Activated B cell treated with CpG ODN at 0.5 μM for 24 hours (primary cell): ENCODE measurements at regions of chr19 and their contacts with region 1.

Region 1: GRCh38 chr19:56393119-56394012 is at the start of gene ZNF582:
- DNase-seq: peak; percentile 85
- ATAC-seq: peak; percentile 96
- H3K4me3 Mint-ChIP-seq: peak within 1 kb of the TSS; percentile 97
- H3K27ac Mint-ChIP-seq: peak within 1 kb of the TSS; percentile 96
- H3K4me1 Mint-ChIP-seq: peaks cover 13% of the 10 kb centered on the region
- H3K27me3 Mint-ChIP-seq: no peaks in the 10 kb centered on the region
- CTCF ChIP-seq: no peak
- total RNA-seq, gene ZNF582: 7.4 and 7.9 TPM in 2 replicates

Region 2: GRCh38 chr19:56367829-56368711 is 25.3 kb before region 1 on chr19:
- CTCF ChIA-PET with region 1: no interaction called
- POLR2A ChIA-PET with region 1: interaction called, 8 read pairs
- intact Hi-C with region 1: loop called (anchors 1 kb)
- DNase-seq: peak; percentile 79
- ATAC-seq: peak; percentile 99
- H3K4me3 Mint-ChIP-seq: peak overlapping the region; percentile 95
- H3K27ac Mint-ChIP-seq: peak overlapping the region; percentile 89
- H3K4me1 Mint-ChIP-seq: peaks cover 23% of the 10 kb centered on the region
- H3K27me3 Mint-ChIP-seq: no peaks in the 10 kb centered on the region
- CTCF ChIP-seq: no peak

Region 3: GRCh38 chr19:56403764-56404704 is 10.7 kb after region 1 on chr19 and contains the start of gene ZNF583:
- CTCF ChIA-PET with region 1: interaction called, 5 read pairs
- POLR2A ChIA-PET with region 1: interaction called, 24 read pairs
- intact Hi-C with region 1: loop called (anchors 1 kb)
- DNase-seq: peak; percentile 93
- ATAC-seq: peak; percentile 87
- H3K4me3 Mint-ChIP-seq: peak within 1 kb of the TSS; percentile 95
- H3K27ac Mint-ChIP-seq: peak within 1 kb of the TSS; percentile 96
- H3K4me1 Mint-ChIP-seq: peaks cover 29% of the 10 kb centered on the region
- H3K27me3 Mint-ChIP-seq: no peaks in the 10 kb centered on the region
- CTCF ChIP-seq: no peak
- total RNA-seq, gene ZNF583: 5.7 and 6.0 TPM in 2 replicates

Region 4: GRCh38 chr19:56507446-56508289 is 114.3 kb after region 1 on chr19 and contains the start of gene ZNF471:
- CTCF ChIA-PET with region 1: no interaction called
- POLR2A ChIA-PET with region 1: no interaction called
- intact Hi-C with region 1: loop called (anchors 1 kb)
- DNase-seq: peak; percentile 81
- ATAC-seq: peak; percentile 99
- H3K4me3 Mint-ChIP-seq: no peak within 1 kb of the TSS
- H3K27ac Mint-ChIP-seq: no peak within 1 kb of the TSS
- H3K4me1 Mint-ChIP-seq: peaks cover 9% of the 10 kb centered on the region
- H3K27me3 Mint-ChIP-seq: no peaks in the 10 kb centered on the region
- CTCF ChIP-seq: no peak
- total RNA-seq, gene ZNF471: 1.8 and 2.1 TPM in 2 replicates

Region 5: GRCh38 chr19:56671613-56671994 is 278.2 kb after region 1 on chr19 and contains the start of gene ZNF835:
- CTCF ChIA-PET with region 1: no interaction called
- POLR2A ChIA-PET with region 1: interaction called, 4 read pairs
- intact Hi-C with region 1: loop called (anchors 1 kb)
- DNase-seq: peak; percentile 91
- ATAC-seq: peak; percentile 98
- H3K4me3 Mint-ChIP-seq: peak within 1 kb of the TSS; percentile 94
- H3K27ac Mint-ChIP-seq: peak within 1 kb of the TSS; percentile 84
- H3K4me1 Mint-ChIP-seq: peaks cover 16% of the 10 kb centered on the region
- H3K27me3 Mint-ChIP-seq: no peaks in the 10 kb centered on the region
- CTCF ChIP-seq: no peak
- total RNA-seq, gene ZNF835: 5.5 and 5.7 TPM in 2 replicates